CD8-positive, alpha-beta T cell (primary cell): ENCODE measurements at regions of chr12 and their contacts with region 1.

Region 1: GRCh38 chr12:120228291-120229070 is 27.6 kb upstream of the RPLP0 start:
- DNase-seq: peak; percentile 73 to 92 (median 89)
- ATAC-seq: peak; percentile 73
- H3K4me3 ChIP-seq: peak overlapping the region; percentile 1 to 30
- H3K4me3 Mint-ChIP-seq: peak overlapping the region; percentile 47
- H3K27ac ChIP-seq: peak overlapping the region in 1 of 2 experiments; percentile 75
- H3K27ac Mint-ChIP-seq: peak overlapping the region; percentile 88
- H3K4me1 ChIP-seq: peaks cover 81% of the 10 kb centered on the region
- H3K4me1 Mint-ChIP-seq: peaks cover 82% of the 10 kb centered on the region
- H3K27me3 ChIP-seq: no peaks in the 10 kb centered on the region
- H3K27me3 Mint-ChIP-seq: no peaks in the 10 kb centered on the region
- CTCF ChIP-seq: peak; percentile 80

Region 2: GRCh38 chr12:120194534-120195395 is 33.7 kb before region 1 on chr12 and contains the start of gene GCN1:
- CTCF ChIA-PET with region 1: interaction called, 26 read pairs
- POLR2A ChIA-PET with region 1: no interaction called
- intact Hi-C with region 1: no loop called
- DNase-seq: peak; percentile 76 to 94 (median 88)
- ATAC-seq: peak; percentile 86
- H3K4me3 ChIP-seq: peak within 1 kb of the TSS; percentile 67 to 72
- H3K4me3 Mint-ChIP-seq: peak within 1 kb of the TSS; percentile 82
- H3K27ac ChIP-seq: peak within 1 kb of the TSS; percentile 73 to 88
- H3K27ac Mint-ChIP-seq: peak within 1 kb of the TSS; percentile 95
- H3K4me1 ChIP-seq: peaks cover 36% of the 10 kb centered on the region
- H3K4me1 Mint-ChIP-seq: peaks cover 44% of the 10 kb centered on the region
- H3K27me3 ChIP-seq: no peaks in the 10 kb centered on the region
- H3K27me3 Mint-ChIP-seq: no peaks in the 10 kb centered on the region
- CTCF ChIP-seq: no peak
- total RNA-seq, gene GCN1: 161 to 163 TPM

Region 3: DNA sequence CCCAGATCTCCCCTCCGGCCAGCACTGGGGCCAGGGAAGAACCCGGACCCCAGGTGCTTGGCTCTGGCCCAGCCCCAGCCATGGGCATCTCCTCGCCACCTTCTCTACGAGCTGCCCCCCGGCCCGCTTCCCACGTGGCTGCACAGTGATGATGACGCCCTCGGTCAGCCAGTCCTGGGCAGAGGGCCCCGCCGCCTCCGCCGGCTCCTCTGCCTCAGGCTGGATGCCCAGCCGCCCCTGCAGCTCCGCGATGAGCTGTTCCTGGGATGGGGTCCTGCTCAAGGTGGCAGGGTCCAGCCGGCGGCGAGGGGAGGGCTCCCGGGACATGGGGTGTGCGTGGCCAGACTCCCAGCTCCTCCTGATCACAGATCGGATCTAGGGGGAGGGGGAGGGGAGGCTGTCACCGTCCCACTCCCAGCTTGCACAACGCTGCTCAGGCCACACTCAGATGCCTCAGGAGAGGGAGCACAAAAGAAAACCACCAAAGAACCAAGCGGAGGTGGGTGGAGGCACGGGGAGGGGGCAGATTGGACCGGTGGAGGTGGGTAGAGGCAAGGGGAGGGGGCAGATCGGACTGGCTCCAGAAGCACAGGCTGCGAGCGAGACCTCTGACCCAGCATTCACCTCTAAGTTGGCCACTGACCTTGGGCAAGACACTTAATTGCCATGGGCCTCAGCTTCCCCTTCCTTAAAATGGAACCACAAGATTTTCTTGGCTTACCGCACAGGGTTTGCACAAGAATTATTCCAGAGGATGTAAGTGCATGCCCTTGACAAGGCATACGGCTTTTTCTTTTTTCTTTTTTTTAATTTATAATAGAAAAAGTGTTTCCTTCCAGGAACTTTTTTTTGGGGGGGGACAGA is 11.5 kb before region 1 on chr12:
- CTCF ChIA-PET with region 1: interaction called, 48 read pairs
- POLR2A ChIA-PET with region 1: no interaction called
- intact Hi-C with region 1: no loop called
- DNase-seq: no peak
- ATAC-seq: no peak
- H3K4me3 ChIP-seq: no peak overlapping the region
- H3K4me3 Mint-ChIP-seq: no peak overlapping the region
- H3K27ac ChIP-seq: no peak overlapping the region
- H3K27ac Mint-ChIP-seq: no peak overlapping the region
- H3K4me1 ChIP-seq: no peaks in the 10 kb centered on the region
- H3K4me1 Mint-ChIP-seq: no peaks in the 10 kb centered on the region
- H3K27me3 ChIP-seq: no peaks in the 10 kb centered on the region
- H3K27me3 Mint-ChIP-seq: no peaks in the 10 kb centered on the region
- CTCF ChIP-seq: no peak

Region 4: DNA sequence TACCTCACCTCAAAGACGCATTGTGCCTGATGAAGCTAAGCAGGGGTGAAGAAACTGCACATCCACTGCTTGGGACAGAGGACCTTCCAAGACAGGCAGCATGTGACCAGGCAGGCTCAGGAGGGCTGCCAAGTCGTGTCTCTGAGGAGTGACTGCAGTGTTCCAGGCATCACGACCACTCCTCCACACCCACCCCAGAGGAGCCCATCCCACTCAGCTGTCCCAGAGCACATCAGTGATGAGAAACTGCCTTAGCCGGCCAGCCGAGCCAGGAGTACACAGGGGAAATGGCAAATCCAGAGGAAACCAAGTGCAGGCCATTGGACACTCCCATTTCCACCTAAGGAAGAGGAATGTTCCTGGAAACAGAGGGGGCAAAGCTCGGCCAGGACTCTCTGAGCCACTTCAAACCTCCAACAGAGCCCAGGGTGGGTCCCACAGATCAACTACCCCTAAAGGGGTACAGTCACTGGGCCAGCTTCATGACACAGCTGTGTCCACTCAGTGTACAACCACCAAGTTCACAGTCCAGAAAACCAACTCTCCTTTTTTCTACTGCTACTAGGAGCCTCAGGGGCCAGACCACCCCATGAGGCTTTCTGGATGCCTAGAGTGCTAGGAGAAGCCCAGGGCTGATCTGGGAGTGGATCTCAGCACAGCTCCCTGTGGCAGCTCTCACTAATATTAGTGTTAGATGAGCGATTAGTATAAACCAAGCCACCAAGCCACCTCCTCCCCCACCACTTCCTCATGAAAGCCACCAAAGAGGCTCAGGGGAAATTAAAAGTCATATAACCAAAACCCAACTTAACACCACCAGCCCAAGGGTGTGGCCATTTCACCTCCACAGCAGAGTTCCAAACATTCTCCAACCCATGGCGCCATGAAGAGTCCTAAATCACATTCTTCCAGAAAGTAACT is 21.7 kb after region 1 on chr12:
- CTCF ChIA-PET with region 1: interaction called, 193 read pairs
- POLR2A ChIA-PET with region 1: interaction called, 39 read pairs
- intact Hi-C with region 1: loop called (anchors 1 kb)
- DNase-seq: peak in 6 of 9 experiments; percentile 25 to 80 (median 54)
- ATAC-seq: no peak
- H3K4me3 ChIP-seq: peak overlapping the region; percentile 33 to 37
- H3K4me3 Mint-ChIP-seq: peak overlapping the region; percentile 71
- H3K27ac ChIP-seq: peak overlapping the region; percentile 28 to 77
- H3K27ac Mint-ChIP-seq: peak overlapping the region; percentile 85
- H3K4me1 ChIP-seq: peaks cover 83% of the 10 kb centered on the region
- H3K4me1 Mint-ChIP-seq: peaks cover 76% of the 10 kb centered on the region
- H3K27me3 ChIP-seq: no peaks in the 10 kb centered on the region
- H3K27me3 Mint-ChIP-seq: no peaks in the 10 kb centered on the region
- CTCF ChIP-seq: no peak

Region 5: DNA sequence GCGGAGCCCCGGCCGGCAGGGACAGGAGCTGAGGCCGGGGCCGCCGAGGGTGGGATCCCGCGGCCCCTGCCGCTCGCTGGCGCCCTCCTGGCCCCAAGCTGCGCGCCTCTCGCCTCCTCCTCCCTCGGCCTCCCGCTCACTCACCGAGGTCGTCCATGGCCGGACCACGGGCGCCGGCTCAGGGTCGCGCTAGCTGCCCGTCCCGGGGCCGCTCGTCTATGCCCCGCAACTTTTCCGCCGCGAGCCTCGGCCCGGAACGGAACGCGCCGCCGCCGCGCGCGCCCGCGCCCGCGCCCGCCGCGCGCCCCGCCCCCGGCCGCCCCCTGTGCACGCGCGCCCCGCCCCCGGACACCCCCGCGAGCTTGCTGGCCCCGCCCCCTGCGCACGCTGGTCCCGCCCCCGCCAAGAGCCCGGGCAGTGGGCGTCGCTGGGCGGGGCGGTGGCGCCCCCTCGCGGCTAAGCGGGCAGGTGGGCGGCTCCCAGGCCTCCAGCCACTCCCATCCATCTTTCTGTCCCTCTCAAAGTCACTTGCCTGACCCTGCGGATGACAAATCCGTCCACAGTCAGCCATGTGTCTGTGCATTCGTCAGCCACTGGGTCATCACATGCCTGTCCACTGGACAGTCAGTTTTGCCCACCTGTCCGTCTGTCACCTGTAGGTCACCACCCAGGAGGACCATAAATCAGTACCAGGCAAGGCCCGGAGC is 37.1 kb after region 1 on chr12 and contains the start of gene PXN:
- CTCF ChIA-PET with region 1: interaction called, 458 read pairs
- POLR2A ChIA-PET with region 1: interaction called, 150 read pairs
- intact Hi-C with region 1: loop called (anchors 1 kb)
- DNase-seq: peak; percentile 80 to 97 (median 93)
- ATAC-seq: peak; percentile 90
- H3K4me3 ChIP-seq: peak within 1 kb of the TSS; percentile 77 to 94
- H3K4me3 Mint-ChIP-seq: peak within 1 kb of the TSS; percentile 97
- H3K27ac ChIP-seq: peak within 1 kb of the TSS; percentile 69 to 71
- H3K27ac Mint-ChIP-seq: peak within 1 kb of the TSS; percentile 95
- H3K4me1 ChIP-seq: peaks cover 40% of the 10 kb centered on the region
- H3K4me1 Mint-ChIP-seq: peaks cover 45% of the 10 kb centered on the region
- H3K27me3 ChIP-seq: no peaks in the 10 kb centered on the region
- H3K27me3 Mint-ChIP-seq: no peaks in the 10 kb centered on the region
- CTCF ChIP-seq: peak; percentile 73
- total RNA-seq, gene PXN: 170 to 171 TPM

Region 6: GRCh38 chr12:120292661-120293531 is 64.4 kb after region 1 on chr12 and contains the start of gene RNU4-1:
- CTCF ChIA-PET with region 1: interaction called, 46 read pairs
- POLR2A ChIA-PET with region 1: interaction called, 106 read pairs
- intact Hi-C with region 1: loop called in 1 of 2 experiments (anchors 1 kb)
- DNase-seq: peak; percentile 53 to 91 (median 75)
- ATAC-seq: peak; percentile 56
- H3K4me3 ChIP-seq: peak within 1 kb of the TSS; percentile 69 to 72
- H3K4me3 Mint-ChIP-seq: no peak within 1 kb of the TSS
- H3K27ac ChIP-seq: peak within 1 kb of the TSS; percentile 99
- H3K27ac Mint-ChIP-seq: no peak within 1 kb of the TSS
- H3K4me1 ChIP-seq: peaks cover 14% of the 10 kb centered on the region
- H3K4me1 Mint-ChIP-seq: peaks cover 8% of the 10 kb centered on the region
- H3K27me3 ChIP-seq: no peaks in the 10 kb centered on the region
- H3K27me3 Mint-ChIP-seq: no peaks in the 10 kb centered on the region
- CTCF ChIP-seq: no peak
- total RNA-seq, gene RNU4-1: 1,572 to 1,612 TPM